Activated CD4-positive, alpha-beta T cell treated with anti-CD3 and anti-CD28 coated beads, Interleukin-2, amount 10 ng/mL, durations not matched to agents 24 days and 14 days (primary cell): ENCODE measurements at regions of chr12 and their contacts with region 1.

Region 1: GRCh38 chr12:6323340-6323994 is 13.0 kb downstream of the PLEKHG6 start:
- DNase-seq: peak; percentile 81
- H3K4me3 Mint-ChIP-seq: peak overlapping the region; percentile 62
- H3K27ac Mint-ChIP-seq: peak overlapping the region; percentile 85
- H3K4me1 Mint-ChIP-seq: peaks cover 33% of the 10 kb centered on the region
- H3K27me3 Mint-ChIP-seq: no peaks in the 10 kb centered on the region

Region 2: GRCh38 chr12:6335451-6336078 is 12.1 kb after region 1 on chr12:
- intact Hi-C with region 1: loop called (anchors 1 kb)
- DNase-seq: peak; percentile 94
- H3K4me3 Mint-ChIP-seq: no peak overlapping the region
- H3K27ac Mint-ChIP-seq: no peak overlapping the region
- H3K4me1 Mint-ChIP-seq: peaks cover 41% of the 10 kb centered on the region
- H3K27me3 Mint-ChIP-seq: no peaks in the 10 kb centered on the region

Region 3: DNA sequence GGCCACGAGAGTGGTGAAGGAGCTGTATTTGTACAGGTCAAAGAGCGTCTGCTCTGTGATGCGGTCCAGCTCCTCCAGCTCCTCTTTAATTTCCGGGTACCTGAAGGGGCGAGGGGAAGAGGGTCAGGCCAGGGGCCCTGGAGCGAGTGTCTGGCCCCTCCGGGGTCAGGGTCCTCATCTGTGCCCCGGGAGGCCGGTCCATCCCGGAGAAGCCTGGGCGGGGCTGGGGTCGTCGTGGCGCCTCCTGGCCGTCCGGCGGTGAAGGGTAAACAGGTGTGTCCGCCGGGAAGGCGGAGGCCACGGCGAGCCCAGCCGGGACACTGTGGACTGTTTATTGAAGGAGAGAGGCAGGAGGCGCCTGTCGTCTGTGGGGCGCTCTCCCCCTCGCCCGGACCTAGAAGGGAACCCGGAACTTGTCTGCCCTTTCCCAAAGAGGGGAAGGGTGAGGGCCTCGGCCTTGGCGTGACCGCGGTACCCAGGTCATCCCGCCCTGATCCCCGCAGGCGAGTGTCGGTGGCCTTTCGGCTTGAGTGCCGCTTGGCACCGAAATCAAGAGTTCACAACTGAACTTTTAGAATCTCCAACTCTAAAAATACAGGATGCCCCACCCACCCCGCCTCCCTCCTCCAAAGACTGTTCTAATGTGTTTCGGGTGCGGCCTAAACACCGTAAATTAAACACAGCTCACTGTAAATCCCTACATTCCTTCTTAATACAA is 40.3 kb after region 1 on chr12:
- intact Hi-C with region 1: loop called (anchors 2 kb)
- DNase-seq: peak; percentile 77
- H3K4me3 Mint-ChIP-seq: peak overlapping the region; percentile 77
- H3K27ac Mint-ChIP-seq: peak overlapping the region; percentile 81
- H3K4me1 Mint-ChIP-seq: peaks cover 27% of the 10 kb centered on the region
- H3K27me3 Mint-ChIP-seq: no peaks in the 10 kb centered on the region

Region 4: GRCh38 chr12:6470375-6471163 is 147.1 kb after region 1 on chr12 and contains the start of gene VAMP1:
- intact Hi-C with region 1: loop called (anchors 1 kb)
- DNase-seq: peak; percentile 99
- H3K4me3 Mint-ChIP-seq: peak within 1 kb of the TSS; percentile 94
- H3K27ac Mint-ChIP-seq: peak within 1 kb of the TSS; percentile 91
- H3K4me1 Mint-ChIP-seq: peaks cover 52% of the 10 kb centered on the region
- H3K27me3 Mint-ChIP-seq: peaks cover 1% of the 10 kb centered on the region
- total RNA-seq, gene VAMP1: 50.0 and 51.2 TPM in 2 replicates